PC-9 (cell line): ENCODE measurements at regions of chr4 and their contacts with region 1.

Region 1: GRCh38 chr4:184649026-184649970 is at the starts of genes CASP3 and PRIMPOL:
- DNase-seq: peak; percentile 66 to 97
- H3K4me3 ChIP-seq: peak within 1 kb of the TSS; percentile 83
- H3K27ac ChIP-seq: peak within 1 kb of the TSS; percentile 73
- H3K4me1 ChIP-seq: peaks cover 20% of the 10 kb centered on the region
- H3K27me3 ChIP-seq: no peaks in the 10 kb centered on the region
- CTCF ChIP-seq: no peak
- total RNA-seq, gene CASP3: 33.5 and 35.7 TPM in 2 replicates
- total RNA-seq, gene PRIMPOL: 23.2 and 29.5 TPM in 2 replicates

Region 2: DNA sequence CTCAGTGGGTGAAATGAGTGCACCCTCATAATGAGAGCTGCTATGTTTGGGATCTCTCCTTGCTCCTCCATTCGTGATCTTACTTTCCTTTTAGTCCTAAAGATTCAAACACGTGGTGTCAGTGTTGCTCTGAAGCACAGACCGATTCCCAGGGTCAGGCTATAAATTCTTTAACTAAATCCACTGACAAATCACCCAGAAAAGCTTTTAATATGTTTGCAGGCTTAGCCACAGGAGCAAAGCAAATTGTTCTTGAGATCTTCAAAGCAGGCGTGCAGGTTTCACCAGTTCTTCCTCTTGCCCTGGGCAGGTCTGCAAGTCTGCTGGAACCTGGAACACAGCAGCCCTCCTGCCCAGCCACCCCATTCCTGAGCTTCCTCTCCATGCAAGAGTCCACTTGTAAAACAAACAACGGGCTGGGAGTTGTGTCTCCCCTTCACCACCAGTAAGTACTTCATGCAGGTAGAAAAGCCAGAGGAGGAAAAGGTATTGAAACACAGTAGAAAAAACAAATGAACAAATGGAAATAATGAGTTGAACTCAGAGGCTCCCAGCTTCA is 361.5 kb before region 1 on chr4:
- CTCF ChIA-PET with region 1: no interaction called
- POLR2A ChIA-PET with region 1: no interaction called
- intact Hi-C with region 1: loop called (anchors 2 kb)
- DNase-seq: peak; percentile 76 to 93
- H3K4me3 ChIP-seq: peak overlapping the region; percentile 27; the same call in 1 of the 2 replicates
- H3K27ac ChIP-seq: peak overlapping the region; percentile 69
- H3K4me1 ChIP-seq: peaks cover 28% of the 10 kb centered on the region
- H3K27me3 ChIP-seq: no peaks in the 10 kb centered on the region
- CTCF ChIP-seq: peak; percentile 25; the same call in 1 of the 2 replicates

Region 3: GRCh38 chr4:184474263-184475095 is 174.8 kb before region 1 on chr4 and contains the start of gene IRF2:
- CTCF ChIA-PET with region 1: no interaction called
- POLR2A ChIA-PET with region 1: no interaction called
- intact Hi-C with region 1: loop called (anchors 2 kb)
- DNase-seq: peak; percentile 81 to 93
- H3K4me3 ChIP-seq: peak within 1 kb of the TSS; percentile 97
- H3K27ac ChIP-seq: peak within 1 kb of the TSS; percentile 83
- H3K4me1 ChIP-seq: peaks cover 21% of the 10 kb centered on the region
- H3K27me3 ChIP-seq: no peaks in the 10 kb centered on the region
- CTCF ChIP-seq: no peak
- total RNA-seq, gene IRF2: 27.4 and 34.4 TPM in 2 replicates

Region 4: GRCh38 chr4:184599492-184600135 is 49.7 kb before region 1 on chr4:
- CTCF ChIA-PET with region 1: no interaction called
- POLR2A ChIA-PET with region 1: interaction called, 10 read pairs
- intact Hi-C with region 1: loop called (anchors 2 kb)
- DNase-seq: peak in 1 of 2 experiments; percentile 15
- H3K4me3 ChIP-seq: no peak overlapping the region
- H3K27ac ChIP-seq: no peak overlapping the region
- H3K4me1 ChIP-seq: peaks cover 4% of the 10 kb centered on the region; the same call in 1 of the 2 replicates
- H3K27me3 ChIP-seq: no peaks in the 10 kb centered on the region
- CTCF ChIP-seq: no peak

Region 5: GRCh38 chr4:184636144-184636543 is 13.2 kb before region 1 on chr4:
- CTCF ChIA-PET with region 1: no interaction called
- POLR2A ChIA-PET with region 1: interaction called, 25 read pairs
- intact Hi-C with region 1: no loop called
- DNase-seq: no peak
- H3K4me3 ChIP-seq: no peak overlapping the region
- H3K27ac ChIP-seq: no peak overlapping the region
- H3K4me1 ChIP-seq: no peaks in the 10 kb centered on the region
- H3K27me3 ChIP-seq: no peaks in the 10 kb centered on the region
- CTCF ChIP-seq: no peak

Region 6: GRCh38 chr4:184733654-184734524 is 84.6 kb after region 1 on chr4 and contains the start of gene CENPU:
- CTCF ChIA-PET with region 1: no interaction called
- POLR2A ChIA-PET with region 1: no interaction called
- intact Hi-C with region 1: loop called (anchors 2 kb)
- DNase-seq: peak; percentile 90 to 98
- H3K4me3 ChIP-seq: peak within 1 kb of the TSS; percentile 95
- H3K27ac ChIP-seq: peak within 1 kb of the TSS; percentile 73
- H3K4me1 ChIP-seq: peaks cover 19% of the 10 kb centered on the region
- H3K27me3 ChIP-seq: no peaks in the 10 kb centered on the region
- CTCF ChIP-seq: no peak
- total RNA-seq, gene CENPU: 25.5 and 47.7 TPM in 2 replicates

Region 7: DNA sequence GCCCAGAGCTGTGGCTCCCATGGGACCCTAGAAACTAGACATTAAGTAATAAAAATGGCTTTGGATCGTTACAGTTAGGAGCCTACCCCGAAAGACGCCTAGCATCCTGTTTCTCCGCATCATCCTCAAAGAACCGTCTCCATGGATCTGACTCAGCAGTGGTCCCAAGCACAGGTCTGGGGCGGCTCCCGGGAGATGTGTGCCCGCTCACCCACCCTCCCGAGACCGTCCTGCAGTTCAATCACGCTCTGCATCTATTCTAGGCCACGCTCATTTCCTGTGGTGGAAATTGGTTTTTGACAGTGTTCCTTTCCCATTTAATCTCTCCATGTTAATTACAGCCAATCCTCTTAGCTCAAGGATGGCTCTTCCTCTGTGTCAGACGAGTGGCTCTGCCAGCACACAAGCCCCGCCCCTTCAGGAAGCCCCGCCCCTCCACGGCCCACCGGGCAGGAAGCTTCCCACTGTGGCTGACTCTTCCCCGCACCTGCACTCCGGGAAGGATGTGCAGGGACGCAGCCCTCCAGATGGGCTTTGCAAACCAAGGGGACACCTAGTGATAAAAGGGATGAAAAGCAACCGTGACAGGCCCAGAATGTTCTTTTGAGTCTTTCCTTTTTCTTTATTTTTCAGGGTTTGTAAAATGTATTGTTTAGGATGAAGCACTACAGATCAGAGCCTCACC is 334.5 kb after region 1 on chr4:
- CTCF ChIA-PET with region 1: no interaction called
- POLR2A ChIA-PET with region 1: no interaction called
- intact Hi-C with region 1: loop called (anchors 1 kb)
- DNase-seq: peak in 1 of 2 experiments; percentile 57
- H3K4me3 ChIP-seq: no peak overlapping the region
- H3K27ac ChIP-seq: no peak overlapping the region
- H3K4me1 ChIP-seq: no peaks in the 10 kb centered on the region
- H3K27me3 ChIP-seq: no peaks in the 10 kb centered on the region
- CTCF ChIP-seq: no peak; the same call in 1 of the 2 replicates